RWPE1 (cell line): ENCODE measurements at regions of chr7 and their contacts with region 1.

Region 1: GRCh38 chr7:30406664-30407425 is 71.7 kb downstream of the NOD1 start:
- DNase-seq: peak; percentile 83
- H3K27ac ChIP-seq: peak overlapping the region; percentile 95
- CTCF ChIP-seq: no peak

Region 2: GRCh38 chr7:30238721-30239441 is 168.0 kb before region 1 on chr7:
- CTCF ChIA-PET with region 1: no interaction called
- POLR2A ChIA-PET with region 1: no interaction called
- DNase-seq: peak; percentile 73
- H3K27ac ChIP-seq: no peak overlapping the region
- CTCF ChIP-seq: no peak

Region 3: DNA sequence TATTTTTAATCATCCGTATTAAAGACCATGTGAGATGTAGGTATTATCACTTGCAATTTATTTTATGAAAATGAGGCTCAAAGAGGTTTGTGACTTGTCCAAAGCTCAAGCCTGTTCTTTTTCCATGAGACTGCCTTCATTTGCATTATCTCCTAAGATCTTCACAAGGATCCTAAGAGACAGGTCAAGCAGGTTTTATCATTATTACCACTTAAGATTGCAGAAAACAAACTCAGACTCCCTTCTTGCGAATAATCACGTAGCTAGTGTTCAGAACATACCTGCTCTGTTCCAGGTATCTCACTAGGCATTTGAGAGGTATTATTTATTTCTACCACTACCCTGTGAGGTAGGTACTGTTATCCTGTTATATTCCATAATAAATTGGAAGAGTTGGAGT is 57.7 kb before region 1 on chr7:
- CTCF ChIA-PET with region 1: interaction called, 10 read pairs
- POLR2A ChIA-PET with region 1: no interaction called
- DNase-seq: no peak
- H3K27ac ChIP-seq: no peak overlapping the region
- CTCF ChIP-seq: no peak